ENCODE measurements at regions of chr20 and their contacts with region 1.

Region 1: DNA sequence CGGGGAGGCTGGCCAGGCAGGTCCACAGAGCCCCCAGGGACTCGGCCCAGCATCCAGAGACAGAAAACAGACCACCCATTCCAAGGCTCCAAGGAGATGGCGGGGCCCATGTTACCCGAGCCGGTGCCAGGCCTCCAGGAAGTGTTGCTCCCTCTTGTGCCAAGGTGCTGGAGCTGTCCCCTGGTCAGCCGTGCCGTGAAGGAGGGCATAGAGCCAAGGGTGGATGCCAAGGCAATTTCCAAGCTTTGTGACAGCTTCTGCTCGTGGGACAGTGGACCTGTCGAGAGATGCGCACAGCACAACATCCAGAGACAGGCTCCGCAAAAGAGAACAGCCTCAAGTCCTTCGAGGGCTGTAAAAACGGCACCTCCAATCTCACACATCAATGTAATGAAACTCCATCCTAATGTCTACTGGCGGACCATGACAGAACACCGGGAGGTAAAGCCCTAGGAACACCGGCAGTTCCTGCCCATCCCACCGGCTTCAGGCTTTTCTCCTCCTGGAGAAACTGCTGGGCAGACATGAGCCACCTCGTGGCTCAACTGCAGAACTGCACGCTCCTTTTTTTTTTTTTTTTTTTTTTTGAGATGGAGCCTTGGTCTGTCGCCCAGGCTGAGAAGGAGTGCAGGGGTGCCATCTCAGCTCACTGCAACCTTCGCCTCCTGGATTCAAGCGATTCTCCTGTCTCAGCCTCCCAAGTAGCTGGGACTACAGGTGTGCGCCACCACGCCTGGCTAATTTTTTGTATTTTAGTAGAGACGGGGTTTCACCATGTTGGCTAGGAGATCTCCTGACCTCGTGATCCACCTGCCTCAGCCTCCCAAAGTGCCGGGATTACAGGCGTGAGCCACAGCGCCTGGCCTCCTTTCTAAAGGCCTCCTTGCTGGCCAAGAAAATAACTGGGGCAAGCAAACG is 30.9 kb upstream of the AVP start:
- DNase-seq: peak; percentile 74
- H3K4me3 Mint-ChIP-seq: no peak overlapping the region
- H3K27ac Mint-ChIP-seq: no peak overlapping the region
- H3K4me1 Mint-ChIP-seq: peaks cover 5% of the 10 kb centered on the region
- H3K27me3 Mint-ChIP-seq: no peaks in the 10 kb centered on the region

Region 2: GRCh38 chr20:3051385-3052019 is 63.9 kb before region 1 on chr20:
- intact Hi-C with region 1: loop called (anchors 1 kb)
- DNase-seq: no peak
- H3K4me3 Mint-ChIP-seq: no peak overlapping the region
- H3K27ac Mint-ChIP-seq: no peak overlapping the region
- H3K4me1 Mint-ChIP-seq: peaks cover 9% of the 10 kb centered on the region
- H3K27me3 Mint-ChIP-seq: no peaks in the 10 kb centered on the region

Region 3: DNA sequence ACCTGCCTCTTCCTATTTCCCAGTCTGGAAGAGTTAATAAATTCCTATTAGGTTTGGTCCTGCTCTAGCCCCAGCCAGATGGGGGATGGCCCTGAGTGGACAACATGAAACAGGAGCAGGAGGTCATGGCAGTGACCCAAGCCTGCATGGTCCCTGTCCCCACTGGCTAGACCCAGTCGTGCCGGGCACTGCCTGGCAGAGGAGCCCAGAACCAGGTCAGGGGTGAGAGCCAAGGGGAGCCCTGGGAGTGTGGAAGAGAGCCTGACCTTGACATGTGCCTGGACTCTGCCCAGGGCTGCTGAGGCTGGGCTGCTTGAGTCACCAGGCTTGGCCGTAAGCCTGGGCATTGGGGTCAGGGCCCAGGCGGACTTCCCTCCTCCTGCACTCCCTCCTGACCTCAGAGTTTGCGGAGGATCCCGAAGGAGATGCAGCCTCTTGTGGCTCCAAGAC is 34.5 kb before region 1 on chr20:
- intact Hi-C with region 1: loop called (anchors 5 kb)
- DNase-seq: no peak
- H3K4me3 Mint-ChIP-seq: no peak overlapping the region
- H3K27ac Mint-ChIP-seq: no peak overlapping the region
- H3K4me1 Mint-ChIP-seq: peaks cover 18% of the 10 kb centered on the region
- H3K27me3 Mint-ChIP-seq: peaks cover 56% of the 10 kb centered on the region

Region 4: DNA sequence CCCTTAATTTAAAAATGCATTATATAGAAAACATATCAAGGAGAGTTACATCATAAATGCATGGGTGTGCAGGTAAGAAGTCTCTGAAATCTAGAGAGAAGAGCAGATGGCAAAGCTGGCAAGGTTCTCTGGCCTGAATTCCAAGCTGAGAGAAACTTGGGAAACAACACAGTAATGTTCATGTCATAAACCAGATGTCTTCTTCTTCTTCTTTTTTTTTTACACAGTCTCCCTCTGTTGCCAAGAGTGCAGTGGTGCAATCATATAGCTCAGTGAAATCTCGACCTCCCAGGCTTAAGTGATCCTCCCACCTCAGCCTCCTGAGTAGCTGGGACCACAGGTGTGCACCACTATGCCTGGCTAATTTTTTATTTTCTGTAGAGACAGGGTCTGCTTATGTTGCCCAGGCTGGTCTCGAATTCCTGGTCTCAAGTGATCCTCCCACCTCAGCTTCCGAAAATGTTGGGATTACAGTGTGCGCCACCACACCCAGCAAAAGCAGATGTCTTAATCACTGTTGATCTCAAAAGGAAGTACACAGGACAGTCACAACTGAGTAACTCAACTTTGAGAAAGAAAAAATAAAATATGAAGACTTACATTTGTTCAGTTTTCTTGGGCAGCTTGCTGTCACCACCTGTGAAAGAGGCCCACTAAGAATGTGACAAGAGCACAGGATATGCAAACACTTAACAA is 214.7 kb after region 1 on chr20:
- intact Hi-C with region 1: no loop called
- DNase-seq: no peak
- H3K4me3 Mint-ChIP-seq: no peak overlapping the region
- H3K27ac Mint-ChIP-seq: no peak overlapping the region
- H3K4me1 Mint-ChIP-seq: peaks cover 7% of the 10 kb centered on the region
- H3K27me3 Mint-ChIP-seq: no peaks in the 10 kb centered on the region